ENCODE measurements at regions of chr2 and their contacts with region 1.

Region 1: DNA sequence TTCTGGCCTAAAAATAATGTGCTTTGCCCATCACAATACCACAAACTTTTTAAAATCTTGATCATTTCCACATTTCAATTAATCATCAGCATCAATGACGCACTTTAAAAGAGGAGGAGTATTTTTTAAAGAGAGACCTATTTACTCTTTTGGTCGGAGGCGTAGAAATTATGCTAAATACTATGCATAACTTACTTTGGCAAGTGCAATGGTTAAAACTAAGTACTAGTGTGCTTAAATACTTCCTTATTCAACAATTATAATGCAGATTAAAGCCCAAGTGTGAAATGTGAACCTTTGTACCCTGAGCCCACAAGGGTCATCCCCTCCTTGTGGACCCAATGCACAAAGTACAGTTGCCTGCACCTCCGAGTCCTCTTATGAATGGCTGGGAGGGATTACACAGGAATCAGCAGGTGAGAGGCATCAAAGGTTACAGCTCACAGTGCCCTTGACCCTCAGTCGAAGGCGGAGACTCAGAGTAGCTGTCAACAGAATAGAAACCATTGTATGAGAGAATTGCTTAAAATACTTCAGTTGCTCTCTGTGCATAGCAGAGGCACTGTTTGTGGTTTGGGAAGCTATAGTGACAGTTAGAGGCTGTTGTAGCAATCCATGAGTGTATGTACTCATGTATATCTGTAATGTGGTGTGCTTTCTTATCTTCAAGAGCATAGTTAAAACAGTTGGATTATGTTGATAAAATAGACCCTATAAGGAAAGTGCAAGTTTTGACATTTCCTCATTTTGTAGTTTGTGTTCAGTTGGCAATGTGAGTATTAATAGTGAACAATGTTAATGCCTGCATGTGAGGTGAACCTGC is 151.7 kb upstream of the ITGA4 start:
- DNase-seq: peak; percentile 91
- H3K4me3 Mint-ChIP-seq: peak overlapping the region; percentile 66
- H3K27ac Mint-ChIP-seq: peak overlapping the region; percentile 89
- H3K4me1 Mint-ChIP-seq: peaks cover 65% of the 10 kb centered on the region
- H3K27me3 Mint-ChIP-seq: no peaks in the 10 kb centered on the region

Region 2: DNA sequence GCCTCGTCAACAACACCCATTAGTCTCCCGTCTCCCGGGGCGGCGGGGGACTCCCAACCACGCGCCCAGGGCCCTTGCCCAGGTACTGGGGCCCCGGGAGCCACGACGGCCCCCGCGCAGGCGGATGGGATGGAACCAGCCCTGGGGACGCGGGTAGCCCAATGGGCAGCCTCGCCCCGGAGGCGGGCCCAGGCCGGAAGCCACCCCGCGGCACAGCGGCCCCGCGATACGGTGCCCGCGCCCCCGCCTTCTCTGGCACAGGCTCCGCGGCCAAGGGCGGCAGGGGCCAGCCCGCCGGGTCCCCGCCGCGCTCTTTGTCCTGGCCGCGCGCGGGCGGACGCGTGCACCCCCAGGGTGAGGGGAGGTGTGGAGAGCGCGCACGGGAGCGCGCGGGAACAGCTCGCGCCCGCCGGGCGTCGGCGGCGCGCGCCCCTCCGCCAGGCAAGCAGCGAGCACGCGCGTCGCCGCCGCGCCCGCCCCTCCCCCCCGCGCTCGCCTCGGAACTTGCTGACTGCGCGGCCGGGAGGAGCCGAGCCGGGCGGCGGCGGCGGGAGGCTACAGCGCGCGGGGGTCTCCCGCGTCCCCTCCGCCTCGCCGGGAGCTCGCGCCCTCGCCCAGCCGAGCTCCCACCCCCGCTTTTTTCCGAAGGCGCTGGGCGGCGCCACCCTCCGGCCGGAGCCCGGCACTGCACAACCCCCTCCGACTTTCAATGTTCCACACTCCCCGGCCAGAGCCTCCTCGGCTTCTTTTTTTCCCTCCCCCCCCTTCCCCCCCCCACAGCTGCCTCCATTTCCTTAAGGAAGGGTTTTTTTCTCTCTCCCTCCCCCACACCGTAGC is 325.2 kb before region 1 on chr2 and contains the start of gene UBE2E3:
- intact Hi-C with region 1: loop called (anchors 5 kb)
- DNase-seq: peak; percentile 94
- H3K4me3 Mint-ChIP-seq: peak within 1 kb of the TSS; percentile 89
- H3K27ac Mint-ChIP-seq: peak within 1 kb of the TSS; percentile 97
- H3K4me1 Mint-ChIP-seq: peaks cover 34% of the 10 kb centered on the region
- H3K27me3 Mint-ChIP-seq: peaks cover 38% of the 10 kb centered on the region
- total RNA-seq, gene UBE2E3: 53.9 and 54.9 TPM in 2 replicates

Region 3: DNA sequence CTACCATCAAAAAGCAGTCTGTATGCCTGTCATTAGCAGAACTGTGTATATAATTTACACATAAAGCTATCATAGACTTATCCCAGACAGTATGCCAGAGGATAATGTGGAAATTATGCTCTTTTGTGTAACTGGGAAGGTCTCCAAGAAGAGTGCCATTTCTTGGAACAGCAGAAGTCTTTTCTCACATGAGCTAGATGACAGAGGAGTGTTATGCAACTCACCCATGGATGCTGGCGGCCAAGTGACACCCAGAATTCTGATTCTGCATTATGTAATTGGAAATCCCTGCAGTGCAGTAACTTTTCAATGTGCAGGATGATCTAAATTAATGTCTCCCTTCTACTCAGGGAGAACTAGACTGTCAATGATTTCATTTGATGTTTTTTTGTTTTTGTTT is 165.1 kb before region 1 on chr2:
- intact Hi-C with region 1: loop called (anchors 2 kb)
- DNase-seq: no peak
- H3K4me3 Mint-ChIP-seq: peak overlapping the region; percentile 79
- H3K27ac Mint-ChIP-seq: peak overlapping the region; percentile 80
- H3K4me1 Mint-ChIP-seq: peaks cover 56% of the 10 kb centered on the region
- H3K27me3 Mint-ChIP-seq: no peaks in the 10 kb centered on the region

Region 4: DNA sequence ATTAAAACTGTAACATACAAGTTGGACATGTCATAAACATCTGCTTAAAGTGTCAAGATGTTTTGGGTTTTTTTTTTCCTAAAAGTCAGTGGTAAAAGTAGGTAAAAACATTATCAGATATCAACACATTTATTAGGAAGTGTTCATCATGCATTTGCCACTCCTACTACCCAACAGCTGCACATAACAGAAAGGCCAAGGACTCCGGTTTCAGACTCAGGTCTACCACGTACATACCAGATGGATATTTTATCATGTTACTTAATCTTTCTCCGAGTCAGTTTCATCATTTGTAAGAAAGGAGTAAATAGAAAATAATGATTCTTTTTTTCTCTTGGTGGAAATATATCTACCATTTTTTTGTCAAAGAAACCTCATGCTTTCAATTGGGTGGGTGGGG is 132.8 kb before region 1 on chr2:
- intact Hi-C with region 1: no loop called
- DNase-seq: no peak
- H3K4me3 Mint-ChIP-seq: no peak overlapping the region
- H3K27ac Mint-ChIP-seq: no peak overlapping the region
- H3K4me1 Mint-ChIP-seq: peaks cover 33% of the 10 kb centered on the region
- H3K27me3 Mint-ChIP-seq: no peaks in the 10 kb centered on the region

Region 5: GRCh38 chr2:181223234-181223633 is 82.3 kb before region 1 on chr2:
- intact Hi-C with region 1: loop called (anchors 1 kb)
- DNase-seq: peak; percentile 59
- H3K4me3 Mint-ChIP-seq: peak overlapping the region; percentile 71
- H3K27ac Mint-ChIP-seq: peak overlapping the region; percentile 96
- H3K4me1 Mint-ChIP-seq: peaks cover 29% of the 10 kb centered on the region
- H3K27me3 Mint-ChIP-seq: no peaks in the 10 kb centered on the region

Region 6: DNA sequence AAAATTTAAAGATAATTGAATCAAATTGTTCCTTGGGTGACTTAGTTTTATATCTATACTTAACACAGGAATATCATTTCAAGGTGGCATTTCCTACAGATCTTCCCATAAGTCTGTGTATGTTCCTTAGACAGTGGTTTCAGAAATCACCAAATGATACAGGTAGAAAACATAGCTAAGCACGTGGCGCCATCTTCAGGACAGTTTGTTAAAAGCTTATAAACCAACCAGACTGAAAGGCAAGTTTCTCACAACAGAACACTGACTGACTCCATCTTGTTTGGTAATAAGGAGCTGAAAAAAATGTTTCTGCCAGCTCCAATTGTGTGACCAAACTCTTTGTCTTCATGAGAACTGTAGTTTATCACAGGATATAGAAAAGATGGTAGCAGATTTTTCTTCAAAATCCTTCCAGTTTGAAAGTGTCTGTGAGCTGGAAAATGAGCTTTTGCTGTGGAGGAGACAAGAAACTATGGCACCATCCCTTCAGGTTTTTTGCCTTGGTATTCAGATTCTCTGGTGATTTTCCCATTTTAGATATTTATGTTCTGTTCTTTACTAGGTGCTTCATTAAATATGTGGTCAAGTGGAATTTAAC is 409.6 kb after region 1 on chr2:
- intact Hi-C with region 1: loop called (anchors 10 kb)
- DNase-seq: peak; percentile 92
- H3K4me3 Mint-ChIP-seq: no peak overlapping the region
- H3K27ac Mint-ChIP-seq: no peak overlapping the region
- H3K4me1 Mint-ChIP-seq: no peaks in the 10 kb centered on the region
- H3K27me3 Mint-ChIP-seq: peaks cover 23% of the 10 kb centered on the region

Measured in activated CD4-positive, alpha-beta T cell treated with anti-CD3 and anti-CD28 coated beads, Interleukin-2, amount 10 ng/mL, durations not matched to agents 24 days and 14 days (primary cell).